ENCODE measurements at regions of chr20 and their contacts with region 1.

Region 1: DNA sequence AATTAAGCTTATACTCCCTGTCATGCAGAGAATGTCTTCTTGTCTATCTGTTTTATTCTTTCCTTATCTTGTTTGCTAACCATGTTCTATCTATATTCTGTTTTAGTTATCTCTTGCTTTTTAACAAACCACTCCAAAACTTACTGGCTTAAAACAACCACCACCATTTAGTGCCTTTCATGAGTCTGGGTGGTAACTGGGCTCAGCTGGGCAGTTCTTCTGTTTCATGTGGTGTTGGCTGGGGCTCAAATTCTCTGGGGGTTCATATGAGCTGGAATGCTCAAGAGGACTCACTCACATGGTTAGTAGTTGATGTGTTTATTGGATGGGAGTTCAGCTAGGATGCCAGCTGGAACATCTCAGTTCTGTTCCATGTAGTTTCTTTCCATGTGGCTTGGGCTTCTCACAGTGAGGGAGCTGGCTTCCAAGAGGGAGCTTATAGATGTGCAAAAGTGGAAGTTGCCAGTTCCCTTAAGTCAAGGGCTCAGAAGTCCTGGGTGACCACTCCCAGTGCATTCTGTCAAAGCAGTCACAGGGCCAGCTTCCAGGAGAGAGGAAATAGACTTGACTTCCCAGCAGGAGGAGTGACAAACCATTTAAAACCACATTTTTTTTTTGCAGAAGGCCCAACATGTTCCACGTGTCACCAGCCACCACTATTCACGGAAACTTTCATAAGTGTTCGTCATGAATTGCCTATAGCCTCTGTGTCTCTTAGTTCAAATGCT is 70.4 kb downstream of the PLCB4 start:
- DNase-seq: no peak
- H3K4me3 ChIP-seq: no peak overlapping the region
- H3K27ac ChIP-seq: no peak overlapping the region
- H3K4me1 ChIP-seq: no peaks in the 10 kb centered on the region
- H3K27me3 ChIP-seq: no peaks in the 10 kb centered on the region
- CTCF ChIP-seq: no peak

Region 2: DNA sequence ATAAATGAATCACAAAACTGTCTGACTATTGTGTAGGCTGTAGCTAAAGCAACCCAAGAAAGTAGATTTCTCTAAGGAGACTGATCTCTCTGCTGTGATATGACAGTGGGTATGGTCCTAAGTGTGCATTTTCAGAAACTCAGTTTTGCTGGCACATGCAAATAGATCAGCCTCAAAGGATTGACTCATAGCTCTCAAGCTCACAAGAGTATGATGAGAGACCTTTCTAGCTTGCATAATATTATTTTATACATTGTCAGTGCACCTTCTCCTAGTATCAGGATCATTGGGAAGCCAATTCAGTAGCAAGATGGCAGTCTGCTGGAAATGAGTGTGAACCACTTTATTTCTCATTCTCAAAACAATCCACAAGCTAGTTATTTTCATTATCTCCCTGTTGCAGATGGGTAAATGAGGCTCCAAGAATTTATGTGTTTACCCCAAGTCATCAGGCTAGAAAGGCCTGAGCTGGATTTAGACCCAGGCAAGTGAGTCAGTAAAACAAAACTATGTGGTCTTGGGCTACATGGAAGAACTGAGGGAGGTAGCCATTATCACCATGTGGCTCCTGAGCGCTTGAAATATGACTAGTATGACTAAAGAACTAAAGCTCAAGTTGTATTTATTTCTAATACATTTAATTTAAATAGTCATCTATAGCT is 98.3 kb before region 1 on chr20:
- CTCF ChIA-PET with region 1: no interaction called
- dilution Hi-C with region 1: loop called (anchors 5 kb)
- in situ Hi-C with region 1: no loop called
- intact Hi-C with region 1: no loop called
- DNase-seq: no peak
- H3K4me3 ChIP-seq: no peak overlapping the region
- H3K27ac ChIP-seq: no peak overlapping the region
- H3K4me1 ChIP-seq: peaks cover 6% of the 10 kb centered on the region
- H3K27me3 ChIP-seq: no peaks in the 10 kb centered on the region
- CTCF ChIP-seq: no peak

Region 3: GRCh38 chr20:9323622-9324021 is 184.4 kb after region 1 on chr20:
- CTCF ChIA-PET with region 1: no interaction called
- dilution Hi-C with region 1: no loop called
- in situ Hi-C with region 1: no loop called
- intact Hi-C with region 1: no loop called
- DNase-seq: no peak
- H3K4me3 ChIP-seq: no peak overlapping the region
- H3K27ac ChIP-seq: no peak overlapping the region
- H3K4me1 ChIP-seq: no peaks in the 10 kb centered on the region
- H3K27me3 ChIP-seq: no peaks in the 10 kb centered on the region
- CTCF ChIP-seq: peak; percentile 38 to 40